ENCODE measurements at regions of chr1 and their contacts with region 1.

Region 1: DNA sequence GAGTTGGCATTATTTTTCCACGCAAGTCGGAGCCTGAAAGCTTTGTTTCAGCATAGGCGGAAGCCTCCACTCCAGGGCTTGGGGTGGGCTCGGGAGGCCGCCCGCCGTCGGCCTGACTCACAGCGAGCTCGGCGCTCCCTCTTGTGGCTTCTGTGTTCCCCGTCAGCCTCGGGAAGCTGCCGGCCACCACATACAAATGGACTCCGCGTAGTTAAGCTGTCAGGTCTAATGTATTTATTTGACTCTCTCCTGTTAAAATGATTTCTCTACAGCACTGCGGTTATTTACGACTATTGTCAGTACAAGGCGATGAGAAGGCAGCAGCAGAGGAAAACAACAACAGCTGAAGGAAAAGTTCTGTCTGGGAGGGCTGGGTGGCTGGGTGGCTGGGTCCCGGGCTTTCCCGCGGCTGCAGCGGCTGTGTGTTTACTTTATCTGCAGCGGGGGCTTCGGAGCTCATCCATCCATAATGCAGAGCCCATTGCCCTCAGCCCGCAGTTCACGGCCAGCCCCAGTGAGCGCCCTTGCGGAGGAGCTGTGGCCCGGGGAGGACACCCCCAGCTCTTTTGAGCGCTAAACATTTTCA is 375.7 kb upstream of the CAMK1G start:
- DNase-seq: peak; percentile 56 to 73 (median 62)
- ATAC-seq: peak; percentile 75
- H3K4me3 ChIP-seq: no peak overlapping the region
- H3K27ac ChIP-seq: no peak overlapping the region
- H3K4me1 ChIP-seq: peaks cover 11% of the 10 kb centered on the region
- H3K27me3 ChIP-seq: peaks cover 0 to 12% of the 10 kb centered on the region in 2 donors
- CTCF ChIP-seq: peak; percentile 56 to 67 (median 63)
- POLR2A ChIP-seq: no peak

Region 2: GRCh38 chr1:208652296-208653160 is 555.3 kb before region 1 on chr1:
- intact Hi-C with region 1: loop called (anchors 10 kb)
- DNase-seq: peak; percentile 54 to 66 (median 64)
- ATAC-seq: peak; percentile 85
- H3K4me3 ChIP-seq: no peak overlapping the region
- H3K27ac ChIP-seq: no peak overlapping the region
- H3K4me1 ChIP-seq: no peaks in the 10 kb centered on the region
- H3K27me3 ChIP-seq: peaks cover 0 to 4% of the 10 kb centered on the region in 2 donors
- CTCF ChIP-seq: peak; percentile 76 to 84 (median 83)
- POLR2A ChIP-seq: no peak

Measured in body of pancreas (tissue), 4 donors.